Colonic mucosa (tissue), 4 donors: ENCODE measurements at regions of chr4 and their contacts with region 1.

Region 1: DNA sequence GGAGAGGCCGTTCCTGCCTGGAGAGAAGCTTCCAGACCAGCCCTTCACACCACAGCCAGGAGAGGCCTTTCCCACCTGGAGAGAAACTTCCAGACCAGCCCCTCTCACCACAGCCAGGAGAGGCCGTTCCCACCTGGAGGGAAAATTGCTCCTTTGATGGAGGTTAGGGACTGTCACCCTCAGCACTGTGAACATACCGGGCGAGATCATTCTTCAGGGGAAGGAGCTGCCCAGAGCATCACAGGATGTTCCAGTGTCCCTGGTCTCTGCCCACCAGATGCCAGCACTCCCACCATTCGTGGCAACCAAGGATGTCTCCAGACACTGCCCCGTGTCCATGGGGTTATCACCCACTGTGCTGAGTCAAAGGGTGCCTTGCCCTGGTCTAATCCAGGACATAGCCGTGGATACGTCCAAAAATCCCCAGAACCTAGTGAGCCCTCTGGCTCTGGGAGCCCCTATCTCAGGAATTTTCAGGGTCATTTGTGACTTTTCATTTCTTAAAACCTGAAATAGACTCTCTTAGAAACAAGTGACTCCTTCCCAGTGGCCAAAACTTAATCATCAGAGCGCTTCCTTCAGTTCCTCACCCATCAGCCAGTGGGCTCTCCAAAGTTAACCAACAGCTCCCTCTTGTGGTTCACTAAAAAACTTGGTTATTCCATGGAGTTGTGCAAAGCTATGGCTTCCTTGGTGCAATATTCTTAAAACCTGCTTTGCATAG is 80.2 kb downstream of the CRMP1 start:
- DNase-seq: peak; percentile 30
- H3K4me3 ChIP-seq: no peak overlapping the region
- H3K27ac ChIP-seq: no peak overlapping the region
- H3K4me1 ChIP-seq: no peaks in the 10 kb centered on the region
- H3K27me3 ChIP-seq: no peaks in the 10 kb centered on the region
- CTCF ChIP-seq: peak; percentile 56

Region 2: DNA sequence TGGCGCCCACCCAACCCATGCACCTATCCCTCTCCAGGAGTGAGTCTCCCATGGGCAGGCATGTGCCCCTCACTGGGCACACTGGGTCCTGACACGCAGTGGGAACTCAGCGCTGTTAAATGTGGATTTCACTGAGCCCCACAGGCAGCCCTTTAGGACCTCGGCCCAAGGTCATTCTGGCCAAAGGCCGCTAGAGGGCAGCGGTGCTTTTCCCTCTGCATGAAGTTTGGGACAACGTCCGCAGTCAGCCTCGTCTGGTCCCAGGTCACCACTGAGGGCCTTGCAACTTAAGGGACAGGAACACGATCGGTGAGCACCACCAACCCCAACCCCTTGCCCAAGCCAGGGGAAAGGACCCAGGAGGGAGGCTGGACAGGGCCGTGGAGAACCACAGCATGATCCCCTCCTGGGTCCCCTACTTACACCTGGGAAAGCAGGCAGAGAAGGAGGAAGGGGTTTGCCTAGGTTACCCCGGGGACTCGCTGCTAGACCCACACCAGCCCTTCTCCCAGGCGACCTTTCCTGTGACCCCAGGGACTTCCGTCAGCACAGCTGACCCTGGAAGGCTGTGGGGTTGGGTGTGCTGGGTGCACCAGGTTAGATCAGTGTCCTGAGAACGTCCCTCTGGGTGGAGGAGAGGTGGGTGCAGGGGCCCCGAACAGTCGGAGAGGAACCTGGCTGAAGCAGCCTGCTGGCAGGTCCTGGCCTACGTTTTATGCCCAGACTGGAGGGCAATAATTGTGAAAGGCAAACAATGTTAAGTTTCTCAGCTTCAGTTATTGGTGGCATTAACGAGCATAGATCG is 817.4 kb before region 1 on chr4:
- intact Hi-C with region 1: loop called (anchors 5 kb)
- DNase-seq: peak; percentile 73
- H3K4me3 ChIP-seq: no peak overlapping the region
- H3K27ac ChIP-seq: no peak overlapping the region
- H3K4me1 ChIP-seq: no peaks in the 10 kb centered on the region
- H3K27me3 ChIP-seq: no peaks in the 10 kb centered on the region
- CTCF ChIP-seq: peak; percentile 82

Region 3: GRCh38 chr4:5050520-5051277 is 762.0 kb before region 1 on chr4:
- intact Hi-C with region 1: loop called (anchors 5 kb)
- DNase-seq: peak; percentile 56
- H3K4me3 ChIP-seq: peak overlapping the region; percentile 31
- H3K27ac ChIP-seq: no peak overlapping the region
- H3K4me1 ChIP-seq: no peaks in the 10 kb centered on the region
- H3K27me3 ChIP-seq: peaks cover 22% of the 10 kb centered on the region
- CTCF ChIP-seq: peak; percentile 27

Region 4: DNA sequence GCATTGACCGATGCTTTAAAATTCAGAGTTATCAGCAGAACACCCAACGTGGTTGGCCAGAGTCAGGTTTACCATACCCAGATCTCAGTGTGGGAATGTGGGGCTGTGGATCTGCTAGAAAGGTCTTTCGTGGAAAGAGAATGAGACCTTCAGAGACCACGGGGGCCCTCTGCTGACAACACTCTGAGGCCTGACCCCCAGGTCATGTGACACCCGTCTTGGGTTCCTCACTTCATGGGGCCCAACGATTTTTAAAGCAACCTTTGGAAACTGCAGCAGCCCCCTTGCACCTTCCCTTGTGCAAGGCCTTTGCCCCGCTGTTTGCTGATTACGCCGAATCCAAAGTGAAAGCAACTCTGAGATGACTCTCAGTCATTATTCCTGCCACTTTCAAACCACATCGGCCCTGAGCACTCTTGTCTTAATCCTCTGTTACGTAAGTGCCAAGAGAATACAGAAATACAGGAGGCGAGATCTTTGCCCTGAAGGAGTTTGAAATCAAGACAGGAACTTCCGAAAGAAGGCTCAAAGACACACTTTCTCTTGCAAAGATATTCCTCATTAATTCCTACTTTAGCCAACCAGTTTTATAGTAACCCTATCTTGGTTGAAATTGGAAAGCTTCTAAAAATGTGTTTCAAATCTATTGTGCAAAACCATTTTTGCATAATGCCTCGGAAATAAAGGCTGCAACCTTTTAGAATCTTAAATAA is 192.6 kb before region 1 on chr4:
- intact Hi-C with region 1: no loop called
- DNase-seq: no peak
- H3K4me3 ChIP-seq: no peak overlapping the region
- H3K27ac ChIP-seq: no peak overlapping the region
- H3K4me1 ChIP-seq: no peaks in the 10 kb centered on the region
- H3K27me3 ChIP-seq: no peaks in the 10 kb centered on the region
- CTCF ChIP-seq: no peak

Region 5: DNA sequence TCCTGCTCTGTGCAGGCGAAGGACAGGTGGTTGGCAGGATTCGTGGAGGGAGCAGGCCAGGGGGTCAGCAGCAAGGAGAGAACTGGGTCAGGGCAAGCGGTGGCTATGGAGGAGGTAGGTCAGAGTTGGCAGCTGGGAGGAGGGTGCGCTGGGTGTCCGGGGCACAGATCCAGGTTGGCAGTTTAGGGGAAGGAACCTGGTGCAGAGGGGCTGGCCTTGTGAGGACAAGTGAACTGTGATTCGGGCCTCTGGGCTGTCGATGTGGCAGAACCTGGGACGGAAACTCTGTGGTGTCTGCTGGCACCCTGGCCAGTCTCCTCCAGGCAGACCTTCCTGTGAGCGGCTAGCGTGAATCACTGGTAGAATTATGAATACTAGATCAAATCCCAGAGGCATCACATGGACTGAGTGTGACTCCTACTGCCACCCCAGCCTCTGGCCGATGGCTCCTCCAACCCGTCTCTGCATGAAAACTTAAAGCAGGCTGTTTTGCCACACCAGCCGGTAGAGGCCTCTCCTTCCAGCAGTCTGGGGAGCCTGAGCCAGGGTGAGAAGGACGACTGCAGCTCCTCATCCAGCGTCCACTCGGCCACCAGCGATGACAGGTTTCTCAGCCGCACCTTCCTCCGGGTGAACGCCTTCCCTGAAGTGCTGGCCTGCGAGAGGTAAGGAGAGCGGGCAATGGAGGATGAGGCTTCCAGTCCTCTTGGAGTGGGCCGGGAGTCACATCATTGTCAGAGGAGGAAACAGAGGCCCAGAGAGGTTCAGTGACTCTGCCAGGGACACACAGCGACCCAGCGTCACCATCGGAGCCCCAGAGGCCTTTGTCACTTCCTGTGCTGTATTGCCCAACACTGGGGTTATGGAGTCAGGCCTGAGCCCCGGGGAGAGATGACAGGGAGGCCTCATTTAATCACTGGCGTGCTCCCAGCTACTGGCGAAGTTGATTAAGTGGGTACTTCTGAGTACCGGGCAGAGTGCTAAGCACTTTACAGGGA is 81.4 kb before region 1 on chr4:
- intact Hi-C with region 1: no loop called
- DNase-seq: no peak
- H3K4me3 ChIP-seq: no peak overlapping the region
- H3K27ac ChIP-seq: no peak overlapping the region
- H3K4me1 ChIP-seq: no peaks in the 10 kb centered on the region
- H3K27me3 ChIP-seq: no peaks in the 10 kb centered on the region
- CTCF ChIP-seq: no peak

Region 6: DNA sequence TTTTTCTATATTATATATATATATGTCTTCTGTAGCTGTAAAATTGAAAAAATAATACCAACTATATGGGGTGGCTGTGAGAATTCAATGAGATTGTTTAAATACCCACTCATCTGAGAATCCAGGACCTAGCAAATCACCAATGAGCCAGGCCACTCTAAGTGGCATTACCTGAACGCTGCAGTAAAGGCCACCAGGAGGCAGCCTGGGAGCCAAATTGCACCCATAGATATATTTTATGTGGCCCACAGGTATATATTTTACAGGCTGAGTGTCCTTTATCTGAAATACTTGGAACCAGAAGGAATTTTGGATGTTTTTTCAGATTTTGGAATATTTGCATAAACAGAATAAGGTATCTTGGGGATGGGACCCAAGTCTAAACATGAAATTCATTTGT is 263.7 kb after region 1 on chr4:
- intact Hi-C with region 1: no loop called
- DNase-seq: no peak
- H3K4me3 ChIP-seq: no peak overlapping the region
- H3K27ac ChIP-seq: no peak overlapping the region
- H3K4me1 ChIP-seq: no peaks in the 10 kb centered on the region
- H3K27me3 ChIP-seq: no peaks in the 10 kb centered on the region
- CTCF ChIP-seq: no peak